Activated naive CD4-positive, alpha-beta T cell treated with anti-CD3 and anti-CD28 coated beads for 36 hours (primary cell): ENCODE measurements at regions of chr3 and their contacts with region 1.

Region 1: DNA sequence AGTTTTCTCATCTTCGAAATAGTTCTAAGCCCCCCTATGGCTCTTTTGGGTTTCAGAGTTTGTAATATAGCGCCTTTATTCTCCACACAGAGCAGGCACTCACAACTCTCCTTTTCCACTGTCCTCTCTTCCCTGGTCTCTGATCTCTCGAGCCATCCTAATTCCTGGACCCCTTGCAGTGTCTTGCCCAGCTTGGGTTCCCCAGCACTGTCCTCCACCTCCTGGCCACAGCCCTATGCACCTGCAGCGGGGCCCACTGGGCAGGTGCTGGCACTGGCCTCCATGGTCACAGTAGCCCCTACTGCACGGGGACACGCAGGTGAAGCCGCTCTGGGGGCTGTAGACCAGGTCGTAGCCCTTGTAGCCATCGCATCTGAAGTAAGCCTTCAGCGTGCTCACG is 27.9 kb downstream of the MUC20 start:
- DNase-seq: no peak
- H3K4me3 Mint-ChIP-seq: no peak overlapping the region
- H3K27ac Mint-ChIP-seq: no peak overlapping the region
- H3K4me1 Mint-ChIP-seq: peaks cover 10% of the 10 kb centered on the region
- H3K27me3 Mint-ChIP-seq: no peaks in the 10 kb centered on the region

Region 2: GRCh38 chr3:195558602-195559001 is 190.1 kb before region 1 on chr3:
- CTCF ChIA-PET with region 1: interaction called, 3 read pairs
- intact Hi-C with region 1: loop called (anchors 2 kb)
- DNase-seq: peak; percentile 67
- H3K4me3 Mint-ChIP-seq: no peak overlapping the region
- H3K27ac Mint-ChIP-seq: no peak overlapping the region
- H3K4me1 Mint-ChIP-seq: peaks cover 37% of the 10 kb centered on the region
- H3K27me3 Mint-ChIP-seq: no peaks in the 10 kb centered on the region

Region 3: DNA sequence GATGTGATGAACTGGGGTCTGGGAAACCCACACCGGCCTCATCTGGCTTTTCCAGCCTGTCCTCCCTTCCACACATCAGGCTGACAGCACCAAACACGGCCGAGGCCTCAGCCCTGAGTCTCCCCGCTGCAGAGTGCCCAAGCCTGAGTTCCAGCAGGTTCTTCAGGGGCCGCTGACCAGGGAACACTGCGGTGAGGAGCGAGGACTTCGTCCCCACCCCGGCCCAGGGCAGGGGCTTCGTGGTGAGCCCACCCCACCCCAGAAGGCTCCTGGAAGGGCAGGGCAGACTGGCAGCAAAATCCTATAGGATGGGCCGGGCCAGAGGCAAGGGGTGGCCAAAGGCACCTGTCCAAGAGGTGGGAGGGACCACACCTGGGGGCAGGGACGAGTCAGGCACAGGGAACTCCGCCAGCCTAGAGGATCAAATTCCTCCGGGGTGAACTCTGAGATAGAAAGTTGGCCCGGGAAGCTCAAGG is 467.5 kb after region 1 on chr3 and contains the start of gene SLC51A:
- CTCF ChIA-PET with region 1: no interaction called
- intact Hi-C with region 1: no loop called
- DNase-seq: no peak
- H3K4me3 Mint-ChIP-seq: no peak within 1 kb of the TSS
- H3K27ac Mint-ChIP-seq: peak within 1 kb of the TSS; percentile 21
- H3K4me1 Mint-ChIP-seq: peaks cover 26% of the 10 kb centered on the region
- H3K27me3 Mint-ChIP-seq: no peaks in the 10 kb centered on the region
- total RNA-seq, gene SLC51A: not detected